MCF 10A (cell line): ENCODE measurements at regions of chr10 and their contacts with region 1.

Region 1: GRCh38 chr10:88473989-88474883 is 108.9 kb downstream of the RNLS start:
- DNase-seq: peak; percentile 95
- H3K4me3 Mint-ChIP-seq: peak overlapping the region; percentile 13
- H3K27ac Mint-ChIP-seq: peak overlapping the region; percentile 80
- H3K4me1 Mint-ChIP-seq: peaks cover 39% of the 10 kb centered on the region
- H3K27me3 Mint-ChIP-seq: no peaks in the 10 kb centered on the region
- CTCF ChIP-seq: no peak

Region 2: DNA sequence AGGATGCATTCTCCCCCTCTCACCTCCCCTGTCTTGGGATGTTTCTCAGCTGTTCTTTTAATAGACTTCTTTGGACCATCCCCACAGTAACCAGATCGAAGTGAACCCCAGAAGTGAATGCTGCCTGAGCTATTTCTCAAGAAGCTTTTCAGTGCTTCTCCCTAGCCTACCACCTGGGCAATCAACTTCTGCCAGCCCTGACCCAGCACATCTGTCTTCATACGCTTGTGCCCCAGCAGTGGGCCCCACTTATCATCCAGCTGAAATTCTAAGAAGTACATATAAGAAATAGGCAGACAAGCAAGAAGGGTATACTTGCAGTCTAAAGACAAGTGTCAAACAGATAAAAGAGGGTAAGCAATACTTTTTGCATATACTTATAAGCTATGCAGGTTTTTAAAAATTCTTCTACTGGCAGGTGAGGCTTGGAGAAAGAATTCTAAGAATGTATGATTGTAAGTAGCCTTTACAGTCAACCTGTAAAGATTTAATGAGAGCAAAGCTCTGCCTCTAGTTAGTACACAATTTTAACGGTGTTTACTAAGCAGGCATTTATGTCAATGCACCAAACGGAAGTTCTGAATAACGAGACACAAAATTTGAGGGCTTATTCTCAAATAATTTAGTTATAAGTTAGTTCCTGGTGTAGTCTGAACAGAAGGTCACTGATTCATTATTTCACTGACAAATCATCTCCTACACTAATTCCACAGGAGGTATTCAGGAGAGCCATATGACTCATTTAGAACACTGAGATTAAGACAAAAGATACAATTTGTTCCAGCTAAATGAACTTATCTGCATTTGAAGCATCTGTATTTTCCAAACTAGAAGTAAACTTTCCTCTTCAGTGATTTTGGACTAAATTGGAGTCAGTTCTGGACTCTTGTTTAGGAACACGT is 25.6 kb after region 1 on chr10:
- CTCF ChIA-PET with region 1: interaction called, 4 read pairs
- POLR2A ChIA-PET with region 1: interaction called, 12 read pairs
- intact Hi-C with region 1: no loop called
- DNase-seq: peak; percentile 39
- H3K4me3 Mint-ChIP-seq: peak overlapping the region; percentile 10
- H3K27ac Mint-ChIP-seq: no peak overlapping the region
- H3K4me1 Mint-ChIP-seq: peaks cover 19% of the 10 kb centered on the region
- H3K27me3 Mint-ChIP-seq: no peaks in the 10 kb centered on the region
- CTCF ChIP-seq: no peak

Region 3: GRCh38 chr10:88541116-88541626 is 66.9 kb after region 1 on chr10:
- CTCF ChIA-PET with region 1: interaction called, 5 read pairs
- POLR2A ChIA-PET with region 1: interaction called, 34 read pairs
- intact Hi-C with region 1: no loop called
- DNase-seq: peak; percentile 38
- H3K4me3 Mint-ChIP-seq: peak overlapping the region; percentile 37
- H3K27ac Mint-ChIP-seq: peak overlapping the region; percentile 100
- H3K4me1 Mint-ChIP-seq: peaks cover 30% of the 10 kb centered on the region
- H3K27me3 Mint-ChIP-seq: no peaks in the 10 kb centered on the region
- CTCF ChIP-seq: no peak